AG04449 (cell line): ENCODE measurements at regions of chr2 and their contacts with region 1.

Region 1: DNA sequence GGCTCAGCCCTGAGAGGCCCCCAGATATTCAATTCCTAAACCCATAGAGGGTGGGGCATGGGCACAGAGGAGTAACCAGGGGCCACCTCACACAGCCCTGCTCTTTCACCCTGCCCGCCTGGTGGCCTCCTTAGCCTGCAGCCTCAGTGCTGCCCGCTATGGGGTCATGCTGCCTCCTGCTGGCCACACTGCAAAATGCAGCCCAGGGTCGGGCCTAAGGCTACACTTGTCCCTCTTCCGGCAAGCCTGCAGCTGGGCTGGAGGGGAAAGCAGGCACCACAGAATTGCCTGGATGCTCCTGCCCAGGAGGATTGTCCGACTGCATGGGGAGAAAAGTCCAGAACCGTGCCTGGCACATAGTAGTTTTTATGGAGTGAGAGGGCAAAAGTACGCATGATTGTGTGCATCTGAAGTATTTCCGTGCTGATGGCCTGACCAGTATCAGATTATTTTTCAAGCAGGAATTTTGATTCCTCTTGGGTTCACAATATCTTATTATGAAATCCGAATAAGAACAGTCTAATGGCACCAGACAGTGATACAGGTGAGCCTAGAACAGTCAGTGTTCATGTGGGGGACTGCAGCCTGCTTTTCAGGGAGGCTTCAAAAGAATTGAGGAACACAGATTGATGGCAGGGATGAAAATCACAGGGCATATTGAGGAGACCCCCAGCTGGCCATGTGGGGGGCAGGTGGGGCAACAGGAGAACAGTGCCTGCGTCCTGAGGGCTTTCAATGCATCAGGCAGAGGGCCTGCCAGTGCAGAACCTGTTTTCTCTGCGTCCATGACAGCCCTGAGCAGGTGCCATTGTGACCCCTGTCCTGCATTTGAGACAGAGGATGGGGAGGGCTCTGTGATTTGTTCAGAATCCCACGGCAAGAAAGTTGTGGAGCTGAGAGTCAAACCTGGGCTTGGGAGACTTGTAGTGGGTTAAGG is 51.2 kb upstream of the ALPP start:
- DNase-seq: no peak
- H3K4me3 ChIP-seq: no peak overlapping the region
- CTCF ChIP-seq: peak; percentile 86

Region 2: GRCh38 chr2:231917280-231918066 is 409.9 kb before region 1 on chr2:
- CTCF ChIA-PET with region 1: interaction called, 147 read pairs
- POLR2A ChIA-PET with region 1: no interaction called
- DNase-seq: no peak
- H3K4me3 ChIP-seq: no peak overlapping the region
- CTCF ChIP-seq: no peak

Region 3: GRCh38 chr2:231925303-231926179 is 401.8 kb before region 1 on chr2:
- CTCF ChIA-PET with region 1: interaction called, 147 read pairs
- POLR2A ChIA-PET with region 1: no interaction called
- DNase-seq: peak; percentile 28
- H3K4me3 ChIP-seq: peak overlapping the region; percentile 46
- CTCF ChIP-seq: peak; percentile 87

Region 4: DNA sequence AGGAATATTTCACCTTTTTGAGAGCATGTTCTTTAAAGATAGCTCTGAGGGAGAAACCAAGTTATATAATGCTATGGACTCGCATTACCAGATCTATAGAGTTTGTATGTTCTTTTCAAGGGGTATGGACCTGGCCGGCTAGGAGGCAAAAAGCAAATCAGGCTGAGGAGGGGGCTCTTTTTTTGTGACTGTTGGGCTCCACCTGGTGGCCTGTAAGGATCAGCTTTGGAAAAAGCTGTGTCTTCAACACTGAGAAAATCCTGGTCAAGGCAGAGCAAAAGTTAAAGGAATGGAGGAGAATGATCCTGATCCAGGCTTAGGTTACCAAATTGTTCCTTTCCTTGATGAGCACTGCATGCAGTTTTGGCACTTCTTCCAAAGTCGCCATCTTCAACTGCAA is 185.3 kb before region 1 on chr2:
- CTCF ChIA-PET with region 1: interaction called, 10 read pairs
- POLR2A ChIA-PET with region 1: no interaction called
- DNase-seq: no peak
- H3K4me3 ChIP-seq: no peak overlapping the region
- CTCF ChIP-seq: peak; percentile 58

Region 5: DNA sequence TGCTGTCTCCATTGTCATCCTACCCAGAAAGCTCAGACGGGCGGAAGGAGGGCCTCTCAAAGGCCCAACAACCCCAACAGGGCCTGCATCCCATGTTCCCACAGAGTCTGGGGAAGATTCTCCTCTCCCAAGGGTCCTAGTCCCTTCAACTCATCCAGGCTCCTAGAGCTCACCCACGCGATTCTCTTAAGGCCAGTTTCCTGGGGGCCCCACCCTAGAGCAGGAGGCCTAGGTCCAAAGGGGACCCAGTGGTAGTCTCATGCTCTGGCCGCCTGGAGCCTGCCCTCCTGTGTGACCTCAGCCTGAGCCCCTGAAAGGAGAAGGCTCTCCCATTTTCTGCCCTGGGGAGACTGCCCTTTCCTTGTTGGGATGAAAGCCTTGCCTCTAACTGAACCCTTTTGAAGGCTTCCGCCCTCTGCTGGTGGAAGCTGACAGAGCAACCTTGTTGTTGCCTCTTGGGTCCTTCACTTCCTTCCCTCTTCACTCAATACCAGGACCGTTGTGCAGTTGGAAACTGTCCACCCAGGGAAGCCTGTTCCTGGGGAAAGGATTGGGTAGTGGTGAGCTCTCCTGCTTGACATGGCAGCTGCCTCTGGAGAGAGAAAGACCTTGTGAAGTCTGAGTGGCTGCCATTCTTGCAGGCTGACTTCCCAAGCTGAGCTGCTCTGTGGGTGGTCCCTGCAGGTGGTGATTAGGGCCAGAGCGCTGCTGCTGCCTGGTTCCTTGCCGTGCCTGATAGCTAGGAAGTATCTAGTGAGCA is 34.8 kb before region 1 on chr2:
- CTCF ChIA-PET with region 1: interaction called, 10 read pairs
- POLR2A ChIA-PET with region 1: no interaction called
- DNase-seq: no peak
- H3K4me3 ChIP-seq: no peak overlapping the region
- CTCF ChIP-seq: peak; percentile 65

Region 6: DNA sequence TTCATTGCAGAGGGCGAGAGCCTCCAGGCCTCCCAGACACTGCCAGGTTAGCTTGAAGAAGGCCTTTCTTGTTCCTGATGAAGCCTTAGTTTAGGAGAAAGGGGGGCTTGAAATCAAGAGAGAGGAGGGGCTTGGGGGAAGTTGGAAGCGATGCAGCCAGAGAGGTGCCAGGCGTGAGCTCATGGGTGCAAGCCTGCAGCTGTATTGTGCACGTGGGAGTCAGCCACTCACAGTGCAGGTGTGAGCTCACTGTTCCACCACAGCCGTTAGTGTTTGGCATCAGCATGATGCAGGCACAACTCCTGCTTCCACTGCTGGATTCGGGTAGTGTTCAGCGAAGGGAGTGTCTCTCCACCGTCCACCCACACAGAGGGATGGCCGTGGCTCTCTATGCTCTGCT is 17.3 kb before region 1 on chr2:
- CTCF ChIA-PET with region 1: interaction called, 89 read pairs
- POLR2A ChIA-PET with region 1: no interaction called
- DNase-seq: no peak
- H3K4me3 ChIP-seq: no peak overlapping the region
- CTCF ChIP-seq: no peak

Region 7: GRCh38 chr2:232315049-232315922 is 12.1 kb before region 1 on chr2:
- CTCF ChIA-PET with region 1: interaction called, 89 read pairs
- POLR2A ChIA-PET with region 1: no interaction called
- DNase-seq: peak; percentile 68
- H3K4me3 ChIP-seq: no peak overlapping the region; the same call in 1 of the 2 replicates
- CTCF ChIP-seq: peak; percentile 32